ENCODE measurements at regions of chr14 and their contacts with region 1.

Region 1: GRCh38 chr14:20652996-20653975 is 11.8 kb upstream of the OR6S1 start:
- DNase-seq: peak in 7 of 14 experiments; percentile 27 to 68 (median 36)
- ATAC-seq: peak; percentile 51
- H3K4me3 ChIP-seq: peak overlapping the region; percentile 3
- H3K4me3 Mint-ChIP-seq: peak overlapping the region; percentile 52
- H3K27ac ChIP-seq: no peak overlapping the region
- H3K27ac Mint-ChIP-seq: peak overlapping the region; percentile 5
- H3K4me1 ChIP-seq: peaks cover 22% of the 10 kb centered on the region
- H3K4me1 Mint-ChIP-seq: peaks cover 27% of the 10 kb centered on the region
- H3K27me3 ChIP-seq: peaks cover 36 to 58% of the 10 kb centered on the region in 2 experiments
- H3K27me3 Mint-ChIP-seq: peaks cover 75% of the 10 kb centered on the region
- CTCF ChIP-seq: no peak

Region 2: DNA sequence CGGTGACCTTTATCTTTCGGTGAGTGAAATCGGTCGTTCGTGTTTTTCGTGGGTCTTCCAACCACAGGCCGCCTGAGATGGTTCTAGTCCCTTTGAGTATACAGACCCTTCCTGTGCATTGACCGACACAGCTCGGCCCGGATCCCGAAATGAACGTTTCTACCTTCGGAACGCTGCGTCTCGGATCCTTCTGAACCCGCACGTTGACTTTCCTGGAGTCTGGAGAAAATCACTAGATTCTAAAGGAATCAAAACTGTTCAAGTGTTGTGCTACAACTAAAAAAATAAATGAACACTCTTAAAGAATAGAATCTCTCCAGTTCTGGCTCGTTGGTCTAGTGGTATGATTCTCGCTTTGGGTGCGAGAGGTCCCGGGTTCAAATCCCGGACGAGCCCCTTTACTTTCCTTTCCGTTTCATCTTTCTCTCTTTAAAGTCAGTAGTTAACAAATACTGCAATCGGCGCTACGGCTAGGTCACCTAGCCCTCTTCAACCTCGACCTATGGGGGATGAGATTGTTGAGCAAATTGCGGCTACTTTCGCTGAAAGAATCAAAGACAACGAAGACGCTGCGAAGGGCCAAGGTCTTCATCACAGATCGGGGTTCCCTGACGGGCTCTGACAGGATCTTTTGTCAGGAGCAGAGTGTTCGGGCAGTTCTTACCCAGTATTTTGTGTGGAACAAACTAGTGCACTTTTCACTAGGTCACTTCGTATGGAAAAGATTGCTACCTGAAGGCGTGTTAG is 20.4 kb before region 1 on chr14:
- CTCF ChIA-PET with region 1: interaction called, 3 read pairs
- POLR2A ChIA-PET with region 1: interaction called, 3 read pairs
- intact Hi-C with region 1: loop called in 1 of 2 experiments (anchors 2 kb)
- DNase-seq: peak in 11 of 14 experiments; percentile 15 to 84 (median 50)
- ATAC-seq: peak; percentile 58
- H3K4me3 ChIP-seq: peak overlapping the region; percentile 59
- H3K4me3 Mint-ChIP-seq: peak overlapping the region; percentile 97
- H3K27ac ChIP-seq: no peak overlapping the region
- H3K27ac Mint-ChIP-seq: peak overlapping the region; percentile 94
- H3K4me1 ChIP-seq: peaks cover 34% of the 10 kb centered on the region
- H3K4me1 Mint-ChIP-seq: peaks cover 54% of the 10 kb centered on the region
- H3K27me3 ChIP-seq: peaks cover 0 to 7% of the 10 kb centered on the region in 2 experiments
- H3K27me3 Mint-ChIP-seq: peaks cover 27% of the 10 kb centered on the region
- CTCF ChIP-seq: no peak